ENCODE measurements at regions of chr6 and their contacts with region 1.

Region 1: DNA sequence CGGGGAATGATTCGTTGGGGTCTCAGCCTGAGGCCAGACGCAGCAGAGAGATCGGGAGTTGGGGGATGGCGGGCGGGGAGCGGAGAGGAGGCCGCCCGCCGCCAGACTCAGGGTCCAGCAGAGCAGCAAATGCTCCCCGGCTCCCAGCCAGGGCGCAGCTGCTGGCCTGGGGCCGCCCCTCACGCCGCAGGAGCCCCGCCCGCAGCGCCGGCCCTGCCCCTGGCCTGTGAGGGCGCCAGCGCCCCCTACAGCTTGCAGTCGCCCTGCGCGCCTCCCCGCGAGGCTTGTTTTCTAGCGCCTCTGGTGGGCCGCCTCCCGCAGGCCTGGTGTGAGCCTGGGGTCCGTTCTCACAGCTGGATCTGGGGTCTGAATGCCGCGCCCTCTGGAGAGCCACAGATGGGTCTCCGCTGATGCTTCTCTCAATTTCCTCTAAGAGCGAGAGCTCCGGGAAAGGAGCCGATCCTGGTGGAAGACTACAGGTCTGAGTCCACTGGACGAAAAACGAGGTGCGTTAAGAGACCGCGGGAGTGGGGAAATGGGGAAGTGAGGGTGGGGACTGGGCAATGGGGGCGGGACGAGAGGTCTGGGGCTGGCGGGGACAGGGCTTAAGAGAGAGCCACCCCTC is 29.9 kb downstream of the TRIM38 start:
- DNase-seq: peak; percentile 92
- H3K4me3 Mint-ChIP-seq: peak overlapping the region; percentile 97
- H3K27ac Mint-ChIP-seq: peak overlapping the region; percentile 96
- H3K4me1 Mint-ChIP-seq: peaks cover 28% of the 10 kb centered on the region
- H3K27me3 Mint-ChIP-seq: no peaks in the 10 kb centered on the region

Region 2: DNA sequence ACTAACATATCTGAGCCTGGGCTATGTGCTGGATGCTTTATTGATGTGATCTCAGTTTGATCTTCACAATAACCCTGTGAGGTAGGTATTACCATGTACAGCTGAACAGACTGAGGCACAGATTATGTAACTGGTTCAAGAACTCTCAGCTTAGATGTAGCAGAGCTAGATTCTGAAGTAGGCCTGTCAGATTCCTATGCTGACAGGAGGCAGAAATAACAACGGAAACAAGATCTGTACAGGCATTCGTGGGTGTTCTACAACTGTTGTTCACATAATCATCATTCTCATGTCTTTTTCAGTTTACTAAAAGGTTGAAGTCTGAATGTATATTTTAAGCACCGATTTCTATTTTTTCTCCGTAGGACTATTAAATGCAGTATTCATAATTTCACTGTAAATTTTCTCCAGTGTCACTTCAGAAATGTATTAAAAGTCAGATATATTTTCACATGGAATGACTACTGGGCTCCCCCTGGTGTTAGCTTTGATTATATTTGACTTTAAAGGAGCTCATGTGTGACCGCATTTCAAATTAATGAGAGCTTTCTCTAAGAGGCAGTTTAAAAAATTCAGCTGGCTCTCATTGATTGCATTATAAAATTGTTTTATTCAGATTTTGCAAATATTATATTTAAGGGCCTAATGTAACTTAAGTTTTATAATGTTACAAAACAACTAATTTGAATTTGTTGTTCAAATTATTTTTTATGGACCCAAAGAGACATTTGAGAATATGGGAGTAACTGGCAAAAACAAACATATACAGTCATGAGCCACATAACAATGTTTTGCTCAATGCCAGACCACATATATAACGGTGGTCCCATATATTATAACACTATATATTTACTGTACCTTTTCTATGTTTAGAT is 274.4 kb before region 1 on chr6:
- intact Hi-C with region 1: loop called (anchors 5 kb)
- DNase-seq: no peak
- H3K4me3 Mint-ChIP-seq: no peak overlapping the region
- H3K27ac Mint-ChIP-seq: no peak overlapping the region
- H3K4me1 Mint-ChIP-seq: peaks cover 2% of the 10 kb centered on the region
- H3K27me3 Mint-ChIP-seq: peaks cover 10% of the 10 kb centered on the region

Region 3: DNA sequence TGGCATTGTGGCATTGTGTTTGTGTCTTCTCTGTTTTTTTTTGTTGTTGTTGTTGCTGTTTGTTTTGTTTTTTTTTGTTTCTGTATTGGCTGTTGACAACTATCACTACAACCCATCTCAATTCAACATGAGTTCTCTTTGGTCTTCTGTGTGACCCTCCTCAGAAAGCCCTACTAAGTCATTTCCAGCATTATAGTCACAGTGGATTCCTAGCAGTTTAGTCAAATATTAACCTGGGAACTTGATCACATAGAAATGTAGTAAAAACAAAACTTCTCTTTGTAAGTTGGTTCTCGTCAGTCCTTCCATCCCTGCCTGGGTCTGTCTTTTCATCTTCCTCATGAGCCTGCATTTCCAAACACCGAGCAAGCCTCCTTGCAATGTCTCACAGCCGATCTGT is 78.8 kb before region 1 on chr6:
- intact Hi-C with region 1: no loop called
- DNase-seq: no peak
- H3K4me3 Mint-ChIP-seq: no peak overlapping the region
- H3K27ac Mint-ChIP-seq: peak overlapping the region; percentile 77
- H3K4me1 Mint-ChIP-seq: peaks cover 40% of the 10 kb centered on the region
- H3K27me3 Mint-ChIP-seq: no peaks in the 10 kb centered on the region

Region 4: GRCh38 chr6:25962149-25963127 is 30.1 kb before region 1 on chr6 and contains the start of gene TRIM38:
- intact Hi-C with region 1: loop called (anchors 1 kb)
- DNase-seq: peak; percentile 77
- H3K4me3 Mint-ChIP-seq: peak within 1 kb of the TSS; percentile 99
- H3K27ac Mint-ChIP-seq: peak within 1 kb of the TSS; percentile 98
- H3K4me1 Mint-ChIP-seq: peaks cover 59% of the 10 kb centered on the region
- H3K27me3 Mint-ChIP-seq: no peaks in the 10 kb centered on the region
- total RNA-seq, gene TRIM38: 29.2 and 29.5 TPM in 2 replicates

Region 5: GRCh38 chr6:26020329-26021000 is 27.9 kb after region 1 on chr6:
- intact Hi-C with region 1: loop called (anchors 1 kb)
- DNase-seq: peak; percentile 84
- H3K4me3 Mint-ChIP-seq: peak overlapping the region; percentile 96
- H3K27ac Mint-ChIP-seq: peak overlapping the region; percentile 100
- H3K4me1 Mint-ChIP-seq: peaks cover 53% of the 10 kb centered on the region
- H3K27me3 Mint-ChIP-seq: no peaks in the 10 kb centered on the region

Measured in activated T-helper 2 cell treated with anti-CD3 and anti-CD28 coated beads, Interferon-gamma antibody, Interleukin-2, Interleukin-4, amounts not matched to agents 10 μg/mL and 5 μg/mL and 100 μg/mL, durations not matched to agents 14 hours and 24 hours and 36 hours (primary cell).